ENCODE measurements at regions of chr10 and their contacts with region 1.

Region 1: DNA sequence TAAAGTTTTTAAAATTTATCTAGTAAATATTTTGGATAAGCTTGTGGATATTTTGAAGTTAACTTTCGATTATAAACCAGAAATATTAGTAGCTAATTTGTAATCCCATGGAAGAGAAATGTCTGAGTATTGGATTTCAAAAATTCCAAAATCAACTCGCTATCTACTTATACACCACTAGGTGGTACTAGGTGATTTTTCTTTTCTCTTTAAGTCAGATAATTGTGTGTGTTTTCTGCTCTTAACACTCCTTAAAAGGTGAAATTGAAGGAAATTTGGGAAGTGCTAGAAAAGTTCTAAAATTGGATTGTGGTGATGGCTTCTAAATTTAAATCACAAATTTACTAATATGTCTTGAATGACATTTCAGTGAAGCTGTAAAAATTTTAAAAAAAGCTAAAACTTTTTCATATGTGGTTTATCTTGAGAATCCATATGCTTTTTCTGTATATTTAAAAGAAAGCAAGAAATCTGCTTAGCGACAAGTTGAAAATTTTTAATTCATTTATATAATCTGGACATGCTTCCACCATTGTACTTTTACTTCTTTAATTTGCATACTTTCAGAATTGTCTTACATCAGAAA is 90.2 kb downstream of the IPMK start:
- DNase-seq: no peak
- H3K4me3 ChIP-seq: no peak overlapping the region
- H3K27ac ChIP-seq: no peak overlapping the region
- H3K4me1 ChIP-seq: peaks cover 0 to 35% (median 0%) of the 10 kb centered on the region in 3 donors
- H3K27me3 ChIP-seq: no peaks in the 10 kb centered on the region
- CTCF ChIP-seq: peak in 5 of 6 experiments; percentile 49 to 74 (median 69)
- POLR2A ChIP-seq: no peak

Region 2: GRCh38 chr10:58291538-58292174 is 114.2 kb after region 1 on chr10:
- intact Hi-C with region 1: loop called (anchors 5 kb)
- DNase-seq: no peak
- H3K4me3 ChIP-seq: no peak overlapping the region
- H3K27ac ChIP-seq: no peak overlapping the region
- H3K4me1 ChIP-seq: no peaks in the 10 kb centered on the region
- H3K27me3 ChIP-seq: no peaks in the 10 kb centered on the region
- CTCF ChIP-seq: peak in 5 of 6 experiments; percentile 73 to 88 (median 74)
- POLR2A ChIP-seq: no peak

Region 3: DNA sequence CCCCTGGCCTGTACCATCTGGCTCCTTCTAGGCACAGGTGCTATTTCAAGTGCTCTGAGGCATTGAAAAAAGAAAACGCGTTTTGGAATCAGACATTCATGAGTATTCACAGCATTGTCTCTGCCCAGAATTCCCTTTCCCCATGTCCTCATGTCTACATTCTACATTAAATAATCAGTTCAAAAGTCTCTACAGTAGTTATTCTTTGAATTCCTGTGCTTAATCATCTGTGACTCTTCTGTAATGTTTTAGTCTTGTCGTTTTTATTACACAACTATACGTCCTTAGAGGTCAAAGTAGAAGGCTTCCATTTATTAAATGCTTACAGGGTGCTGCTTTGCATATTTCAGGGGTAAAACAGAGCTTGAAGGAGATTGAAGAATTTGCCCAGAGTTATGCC is 430.9 kb after region 1 on chr10:
- intact Hi-C with region 1: no loop called
- DNase-seq: no peak
- H3K4me3 ChIP-seq: no peak overlapping the region
- H3K27ac ChIP-seq: no peak overlapping the region
- H3K4me1 ChIP-seq: no peaks in the 10 kb centered on the region
- H3K27me3 ChIP-seq: no peaks in the 10 kb centered on the region
- CTCF ChIP-seq: no peak
- POLR2A ChIP-seq: no peak